ENCODE measurements at regions of chr4 and their contacts with region 1.

Region 1: DNA sequence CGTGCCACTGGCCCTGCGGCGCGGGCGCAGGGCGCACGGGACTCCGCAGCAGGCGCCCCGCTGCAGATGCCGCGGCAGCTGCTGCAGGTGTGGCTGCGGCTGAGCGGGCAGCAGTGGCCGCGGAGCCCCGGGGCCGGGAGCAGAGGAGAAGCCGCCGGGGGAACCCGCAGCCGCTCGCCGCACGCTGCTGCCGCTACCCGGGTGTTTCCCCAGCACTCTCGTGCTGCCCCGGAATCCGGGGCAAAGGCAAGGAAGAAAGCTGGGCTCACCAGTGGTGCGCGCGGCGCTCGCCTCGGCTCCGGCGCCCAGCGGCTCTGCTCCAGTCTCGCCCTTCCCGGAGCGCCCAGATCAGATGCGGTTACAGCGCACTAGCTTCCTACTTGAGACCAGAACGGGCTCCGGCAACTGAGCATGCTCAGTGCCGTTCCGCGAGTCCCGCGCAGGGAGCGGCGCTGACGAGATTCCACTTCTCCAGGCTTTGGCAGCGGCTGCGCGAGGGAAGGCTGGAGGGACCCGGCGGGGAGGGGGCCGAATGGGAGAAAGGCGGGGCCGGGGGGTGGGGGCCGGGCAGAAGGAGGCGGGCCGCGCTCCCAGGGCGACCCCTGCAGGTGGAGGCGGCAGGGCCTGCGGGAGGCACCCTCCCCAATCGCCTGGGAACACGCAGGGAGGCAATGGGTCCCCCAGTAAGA is at the start of gene APBB2:
- DNase-seq: peak; percentile 94 to 97
- H3K4me3 ChIP-seq: peak within 1 kb of the TSS; percentile 81
- H3K4me1 ChIP-seq: peaks cover 25% of the 10 kb centered on the region
- H3K27me3 ChIP-seq: no peaks in the 10 kb centered on the region

Region 2: DNA sequence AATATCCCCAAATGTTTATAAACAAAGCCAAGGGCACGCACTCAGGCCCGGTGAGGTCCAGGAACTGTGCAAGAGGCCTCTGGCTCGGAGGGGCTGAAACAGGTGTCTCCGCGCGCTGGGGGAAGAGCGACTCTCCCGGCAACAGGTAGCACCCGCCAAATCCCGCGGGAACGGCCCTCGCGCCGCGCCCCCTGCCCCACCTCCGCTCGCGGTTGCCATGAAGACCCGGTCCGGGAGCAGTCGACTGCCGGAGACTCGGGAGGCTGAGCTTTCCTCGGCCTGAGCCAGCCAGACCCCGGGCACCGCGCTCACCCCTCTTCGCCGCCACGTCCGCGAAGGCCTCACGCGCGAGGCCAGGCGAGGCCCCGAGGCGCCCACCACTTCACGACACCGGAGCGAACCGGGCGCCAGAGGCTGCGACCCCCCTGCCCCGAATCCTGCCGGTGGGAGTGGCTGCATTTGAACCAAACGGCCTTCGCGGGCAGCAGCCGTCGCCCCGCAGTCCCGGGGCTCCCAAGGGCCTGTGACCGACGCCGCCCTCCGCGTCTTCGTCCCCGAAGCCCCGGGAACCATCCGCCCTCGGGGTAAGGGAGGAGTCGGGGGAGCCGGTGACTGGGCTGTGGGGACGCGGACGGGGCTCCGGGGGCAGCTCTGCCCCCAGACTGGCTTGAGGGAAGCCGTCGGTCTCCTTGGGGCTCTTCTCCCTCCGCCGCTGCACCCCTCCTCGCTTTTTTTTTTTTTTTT is 464.4 kb before region 1 on chr4 and contains the start of gene NSUN7:
- in situ Hi-C with region 1: loop called (anchors 25 kb)
- DNase-seq: no peak
- H3K4me3 ChIP-seq: no peak within 1 kb of the TSS
- H3K4me1 ChIP-seq: no peaks in the 10 kb centered on the region; the same call in 1 of the 2 replicates
- H3K27me3 ChIP-seq: 0 out of 2 replicates have a peak, but pooled peaks cover 3% of the 10 kb centered on the region

Region 3: GRCh38 chr4:40924793-40925117 is 289.5 kb before region 1 on chr4:
- in situ Hi-C with region 1: loop called (anchors 5 kb)
- DNase-seq: no peak
- H3K4me3 ChIP-seq: no peak overlapping the region
- H3K4me1 ChIP-seq: no peaks in the 10 kb centered on the region
- H3K27me3 ChIP-seq: no peaks in the 10 kb centered on the region

Region 4: DNA sequence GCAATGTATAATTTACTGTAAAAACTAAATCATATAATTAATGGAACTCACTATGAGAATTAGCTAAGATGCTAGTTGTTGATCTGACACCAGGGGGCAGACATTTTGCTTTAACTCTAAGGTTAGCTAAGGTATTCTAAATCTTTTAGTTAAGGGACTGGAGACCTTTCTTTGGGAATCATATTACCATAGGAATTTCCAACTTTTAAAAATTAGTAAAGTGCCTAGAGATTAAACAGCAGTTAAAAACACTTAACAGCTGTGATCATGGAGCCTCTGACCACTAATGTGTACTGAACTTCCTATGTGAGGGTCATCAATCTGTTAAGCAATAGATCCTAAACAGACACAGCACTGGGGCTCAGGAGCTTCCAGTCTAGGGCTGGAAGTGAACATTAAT is 237.9 kb before region 1 on chr4:
- in situ Hi-C with region 1: loop called (anchors 5 kb)
- DNase-seq: peak; percentile 62 to 72
- H3K4me3 ChIP-seq: no peak overlapping the region
- H3K4me1 ChIP-seq: 0 out of 2 replicates have a peak, but pooled peaks cover 3% of the 10 kb centered on the region
- H3K27me3 ChIP-seq: no peaks in the 10 kb centered on the region